ENCODE measurements at regions of chr13 and their contacts with region 1.

Region 1: GRCh38 chr13:102845630-102846260 is at the start of gene ERCC5:
- DNase-seq: peak; percentile 86 to 98 (median 91)

Region 2: DNA sequence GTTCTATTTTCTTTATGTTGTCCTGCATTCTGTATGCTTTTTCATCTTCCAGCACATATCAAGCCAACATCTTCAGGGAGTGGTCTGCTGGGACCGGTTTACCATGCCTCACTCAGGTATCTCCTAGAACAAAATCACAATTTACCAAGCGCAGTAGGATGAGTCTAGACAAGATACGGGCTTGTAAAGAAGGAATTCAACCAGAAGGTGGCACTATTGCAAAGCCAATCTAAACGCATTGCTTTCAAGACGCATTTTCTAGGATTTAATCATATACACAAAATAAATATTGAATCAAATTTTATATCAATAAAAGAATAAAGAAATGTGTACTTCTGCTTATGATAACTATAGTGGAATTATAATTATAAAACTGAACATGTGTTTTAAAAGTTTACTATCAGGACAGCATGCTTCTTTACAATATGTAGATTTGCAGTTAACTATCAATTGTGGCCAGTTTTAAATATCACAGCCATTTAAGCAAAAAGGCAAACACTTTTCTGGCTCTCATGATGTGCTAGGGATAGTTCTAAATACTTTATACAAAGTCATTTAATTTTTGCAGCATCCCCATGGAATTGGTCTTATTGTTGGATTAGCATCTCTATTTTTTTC is 265.1 kb before region 1 on chr13:
- intact Hi-C with region 1: loop called (anchors 2 kb)
- DNase-seq: peak in 1 of 10 donors; percentile 20

Region 3: GRCh38 chr13:102596147-102597028 is 249.4 kb before region 1 on chr13 and contains the start of gene TPP2:
- intact Hi-C with region 1: loop called (anchors 2 kb)
- DNase-seq: peak; percentile 97 to 100 (median 99)

Region 4: DNA sequence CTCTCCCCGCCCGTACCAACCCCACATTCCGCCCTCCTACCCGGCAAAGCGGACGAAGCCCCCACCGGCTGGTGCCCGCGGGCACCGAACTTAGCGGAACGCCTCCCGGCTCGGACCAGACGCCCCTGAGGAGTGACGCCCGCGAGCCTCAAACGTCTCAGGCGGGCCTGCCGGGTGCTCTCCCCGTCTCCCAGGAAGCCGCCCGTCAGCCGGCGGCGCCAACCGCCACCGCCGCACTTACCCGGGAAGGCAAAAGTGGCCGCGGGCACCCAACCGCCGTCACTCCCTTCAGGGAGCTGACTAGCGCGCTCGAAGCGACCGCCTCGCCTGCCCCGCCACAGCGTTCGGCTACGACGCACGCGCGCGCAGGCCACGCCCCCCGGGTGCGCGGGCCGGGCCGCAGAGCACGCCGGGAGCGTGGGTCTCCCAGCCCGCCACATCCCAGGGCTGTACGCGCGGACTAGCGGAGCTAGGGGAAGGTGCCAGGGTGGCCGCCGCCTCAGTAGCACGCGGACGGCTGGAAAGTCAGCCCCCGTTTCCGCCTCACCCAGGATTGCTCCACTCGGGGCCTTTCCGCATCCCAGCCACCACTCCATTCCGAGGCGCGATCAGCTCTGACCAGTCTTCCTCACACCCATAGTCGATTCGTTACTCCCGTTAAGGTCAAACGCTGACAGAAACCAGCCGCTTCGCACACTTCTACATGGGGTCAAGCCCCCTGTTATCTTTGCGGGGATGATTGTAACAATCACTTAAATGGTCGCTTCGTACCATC is 72.1 kb before region 1 on chr13 and contains the start of gene TEX30:
- intact Hi-C with region 1: loop called (anchors 2 kb)
- DNase-seq: peak; percentile 67 to 97 (median 76)

Region 5: DNA sequence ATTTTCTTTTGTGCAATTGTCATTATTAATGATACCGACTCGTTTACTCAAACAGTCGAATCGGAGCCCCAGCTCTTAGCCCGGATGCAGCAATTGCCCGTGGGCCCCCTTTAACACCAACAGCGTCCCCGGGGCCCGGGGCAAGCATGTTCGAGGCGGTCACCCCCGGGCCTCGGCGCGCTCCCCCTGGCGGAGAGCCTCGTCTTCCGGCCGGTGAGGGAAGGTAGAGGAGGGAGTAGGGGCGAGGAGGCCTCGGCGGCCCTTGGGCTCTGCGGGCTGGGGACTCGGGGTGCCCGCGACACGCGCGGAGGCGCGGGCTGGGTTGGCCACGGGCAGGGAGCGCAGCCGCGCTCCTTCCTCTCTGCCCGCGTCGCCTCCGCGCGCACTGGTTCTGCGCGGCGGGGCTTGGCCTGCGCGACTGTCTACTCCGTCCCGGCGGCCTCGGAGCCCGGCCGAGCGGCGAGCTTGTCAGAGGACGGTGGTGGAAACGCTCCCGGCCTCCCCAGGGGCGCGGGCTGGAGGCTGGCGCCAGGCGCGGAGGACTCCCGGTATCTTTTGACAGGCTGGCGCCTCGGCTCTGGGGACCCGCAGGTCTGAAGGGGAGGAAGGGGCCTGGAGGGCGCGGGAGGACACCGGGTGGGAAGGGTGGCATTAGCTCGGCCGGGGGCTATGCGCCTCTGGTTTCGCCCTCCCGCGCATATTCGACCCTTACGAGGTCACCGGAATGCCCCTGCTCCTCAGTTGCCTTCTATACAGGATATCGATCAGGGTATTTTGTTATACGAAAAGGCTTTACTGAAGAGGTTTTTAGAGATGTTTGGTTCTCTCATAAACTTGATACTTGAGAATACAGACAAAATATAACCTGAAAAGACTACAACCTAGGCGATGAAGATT is 45.4 kb before region 1 on chr13:
- intact Hi-C with region 1: loop called (anchors 2 kb)
- DNase-seq: peak; percentile 67 to 95 (median 77)